ENCODE measurements at regions of chr1 and their contacts with region 1.

Region 1: DNA sequence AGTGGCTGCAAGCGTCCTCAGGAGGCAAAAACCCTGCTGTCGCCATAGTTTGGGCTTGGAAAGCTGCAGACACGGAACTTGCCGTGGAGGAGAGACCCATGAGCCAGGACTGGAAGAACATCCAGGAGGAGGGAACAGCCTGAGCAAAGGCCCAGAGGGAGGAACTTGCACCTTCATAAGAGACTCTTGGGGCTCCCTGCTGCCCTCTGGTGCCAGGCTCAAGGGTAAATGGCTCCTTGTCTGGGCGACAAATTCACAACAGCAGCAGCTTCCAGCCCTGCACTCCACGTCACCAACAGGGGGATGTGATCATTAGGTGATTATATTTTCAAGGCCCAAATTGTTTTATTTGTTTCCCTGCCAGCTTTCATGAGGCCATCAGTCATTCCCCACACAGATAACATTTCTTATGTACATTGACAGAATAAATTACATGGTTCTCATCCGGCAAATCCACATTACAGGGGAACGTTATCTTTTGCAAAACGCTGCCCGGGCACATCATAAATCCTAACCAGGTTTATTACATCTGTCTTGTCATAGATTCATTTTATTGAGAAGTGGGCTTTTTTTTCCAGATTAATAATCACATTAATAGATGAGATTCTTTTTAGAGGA is 143.0 kb upstream of the GRIK3 start:
- DNase-seq: peak; percentile 64
- ATAC-seq: peak; percentile 97
- H3K4me3 ChIP-seq: no peak overlapping the region
- H3K27ac ChIP-seq: no peak overlapping the region
- H3K4me1 ChIP-seq: no peaks in the 10 kb centered on the region
- H3K27me3 ChIP-seq: peaks cover 56% of the 10 kb centered on the region
- CTCF ChIP-seq: peak; percentile 56 to 69 (median 65)
- POLR2A ChIP-seq: no peak
- RAD21 ChIP-seq: peak; percentile 60

Region 2: DNA sequence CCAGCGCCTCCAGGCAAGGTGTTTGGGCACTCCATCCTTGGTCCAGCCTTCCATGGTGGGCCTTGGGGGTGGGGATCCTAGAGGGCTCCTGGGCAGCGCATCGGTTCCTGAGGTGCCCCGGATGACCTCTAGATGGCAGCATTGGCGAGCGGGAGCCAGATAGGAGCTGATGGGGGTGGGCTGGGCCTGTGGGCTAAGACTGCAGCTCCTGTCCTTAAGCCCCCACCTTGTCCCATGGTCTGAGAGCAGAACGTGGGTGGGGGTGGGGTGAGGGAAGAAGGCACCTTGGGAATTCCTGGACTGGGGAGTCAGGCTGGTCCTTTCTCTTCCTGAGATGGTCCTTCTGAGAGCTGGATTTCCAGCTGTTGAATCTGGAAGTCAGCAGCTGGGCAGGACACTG is 601.2 kb before region 1 on chr1:
- CTCF ChIA-PET with region 1: interaction called, 14 read pairs
- POLR2A ChIA-PET with region 1: no interaction called
- RAD21 ChIA-PET with region 1: no interaction called
- intact Hi-C with region 1: loop called (anchors 10 kb)
- DNase-seq: peak; percentile 43
- ATAC-seq: peak; percentile 99
- H3K4me3 ChIP-seq: no peak overlapping the region
- H3K27ac ChIP-seq: no peak overlapping the region
- H3K4me1 ChIP-seq: no peaks in the 10 kb centered on the region
- H3K27me3 ChIP-seq: peaks cover 14% of the 10 kb centered on the region; the same call in 1 of the 2 replicates
- CTCF ChIP-seq: peak; percentile 59 to 92 (median 92); a peak in 5 of 6 replicates
- POLR2A ChIP-seq: no peak
- RAD21 ChIP-seq: peak; percentile 88

Region 3: GRCh38 chr1:36609241-36610027 is 567.9 kb before region 1 on chr1:
- CTCF ChIA-PET with region 1: interaction called, 3 read pairs
- POLR2A ChIA-PET with region 1: no interaction called
- RAD21 ChIA-PET with region 1: no interaction called
- intact Hi-C with region 1: loop called (anchors 2 kb)
- DNase-seq: peak; percentile 68
- ATAC-seq: peak; percentile 97
- H3K4me3 ChIP-seq: no peak overlapping the region
- H3K27ac ChIP-seq: no peak overlapping the region
- H3K4me1 ChIP-seq: no peaks in the 10 kb centered on the region
- H3K27me3 ChIP-seq: peaks cover 25% of the 10 kb centered on the region; the same call in 1 of the 2 replicates
- CTCF ChIP-seq: peak; percentile 70 to 99 (median 96)
- POLR2A ChIP-seq: no peak
- RAD21 ChIP-seq: peak; percentile 86

Region 4: GRCh38 chr1:36703526-36704208 is 473.7 kb before region 1 on chr1:
- CTCF ChIA-PET with region 1: no interaction called
- POLR2A ChIA-PET with region 1: no interaction called
- RAD21 ChIA-PET with region 1: no interaction called
- intact Hi-C with region 1: loop called (anchors 1 kb)
- DNase-seq: peak; percentile 58
- ATAC-seq: peak; percentile 98
- H3K4me3 ChIP-seq: no peak overlapping the region
- H3K27ac ChIP-seq: no peak overlapping the region
- H3K4me1 ChIP-seq: peaks cover 0 to 9% of the 10 kb centered on the region in 2 experiments; a peak in 2 of 4 replicates
- H3K27me3 ChIP-seq: peaks cover 47% of the 10 kb centered on the region
- CTCF ChIP-seq: peak; percentile 80 to 97 (median 91)
- POLR2A ChIP-seq: no peak
- RAD21 ChIP-seq: peak; percentile 94

Region 5: GRCh38 chr1:36771660-36772284 is 405.6 kb before region 1 on chr1:
- CTCF ChIA-PET with region 1: no interaction called
- POLR2A ChIA-PET with region 1: no interaction called
- RAD21 ChIA-PET with region 1: no interaction called
- intact Hi-C with region 1: no loop called
- DNase-seq: no peak
- ATAC-seq: no peak
- H3K4me3 ChIP-seq: no peak overlapping the region
- H3K27ac ChIP-seq: no peak overlapping the region
- H3K4me1 ChIP-seq: no peaks in the 10 kb centered on the region
- H3K27me3 ChIP-seq: peaks cover 80% of the 10 kb centered on the region
- CTCF ChIP-seq: no peak
- POLR2A ChIP-seq: no peak
- RAD21 ChIP-seq: no peak

Region 6: GRCh38 chr1:37423810-37424209 is 246.5 kb after region 1 on chr1:
- CTCF ChIA-PET with region 1: no interaction called
- POLR2A ChIA-PET with region 1: no interaction called
- RAD21 ChIA-PET with region 1: no interaction called
- intact Hi-C with region 1: no loop called
- DNase-seq: no peak
- ATAC-seq: peak; percentile 64
- H3K4me3 ChIP-seq: peak overlapping the region in 1 of 2 experiments; percentile 2; a peak in 2 of 4 replicates
- H3K27ac ChIP-seq: no peak overlapping the region
- H3K4me1 ChIP-seq: no peaks in the 10 kb centered on the region
- H3K27me3 ChIP-seq: peaks cover 18% of the 10 kb centered on the region
- CTCF ChIP-seq: no peak
- POLR2A ChIP-seq: peak; percentile 46
- RAD21 ChIP-seq: no peak

Region 7: DNA sequence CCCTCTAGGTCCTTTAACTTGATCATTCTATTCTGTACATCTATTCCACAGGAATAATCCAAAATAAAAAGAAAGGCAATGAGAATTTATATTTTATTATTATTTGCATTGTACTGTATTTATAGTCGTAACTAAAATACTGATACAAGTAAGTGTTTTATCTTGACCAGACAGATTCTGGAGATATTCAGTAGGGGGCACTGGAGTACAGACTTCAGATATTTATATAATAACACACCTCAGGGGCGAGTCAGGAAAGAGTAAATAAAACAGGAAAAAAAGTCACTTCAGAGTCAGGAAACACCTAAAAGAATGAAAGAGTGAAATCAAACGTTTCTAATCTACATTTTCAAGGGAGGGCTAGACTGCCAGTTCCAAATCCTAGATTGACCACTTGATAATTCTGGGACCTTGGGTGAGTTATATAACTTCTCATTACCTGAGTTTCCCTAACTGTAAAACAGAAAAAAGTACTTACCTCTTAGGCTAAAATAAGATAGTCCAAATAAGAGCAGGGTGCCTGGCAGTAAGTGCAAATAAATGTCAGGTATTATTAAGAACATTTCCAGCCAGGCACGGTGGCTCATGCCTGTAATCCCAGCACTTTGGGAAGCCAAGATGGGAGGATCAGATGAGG is 713.1 kb after region 1 on chr1:
- CTCF ChIA-PET with region 1: no interaction called
- POLR2A ChIA-PET with region 1: no interaction called
- RAD21 ChIA-PET with region 1: no interaction called
- intact Hi-C with region 1: no loop called
- DNase-seq: peak; percentile 23
- ATAC-seq: peak; percentile 74
- H3K4me3 ChIP-seq: no peak overlapping the region
- H3K27ac ChIP-seq: no peak overlapping the region
- H3K4me1 ChIP-seq: no peaks in the 10 kb centered on the region
- H3K27me3 ChIP-seq: no peaks in the 10 kb centered on the region
- CTCF ChIP-seq: peak; percentile 50 to 74 (median 60); a peak in 5 of 6 replicates
- POLR2A ChIP-seq: no peak
- RAD21 ChIP-seq: peak; percentile 75

Measured in HCT116 (cell line).